ENCODE measurements at regions of chr17 and their contacts with region 1.

Region 1: DNA sequence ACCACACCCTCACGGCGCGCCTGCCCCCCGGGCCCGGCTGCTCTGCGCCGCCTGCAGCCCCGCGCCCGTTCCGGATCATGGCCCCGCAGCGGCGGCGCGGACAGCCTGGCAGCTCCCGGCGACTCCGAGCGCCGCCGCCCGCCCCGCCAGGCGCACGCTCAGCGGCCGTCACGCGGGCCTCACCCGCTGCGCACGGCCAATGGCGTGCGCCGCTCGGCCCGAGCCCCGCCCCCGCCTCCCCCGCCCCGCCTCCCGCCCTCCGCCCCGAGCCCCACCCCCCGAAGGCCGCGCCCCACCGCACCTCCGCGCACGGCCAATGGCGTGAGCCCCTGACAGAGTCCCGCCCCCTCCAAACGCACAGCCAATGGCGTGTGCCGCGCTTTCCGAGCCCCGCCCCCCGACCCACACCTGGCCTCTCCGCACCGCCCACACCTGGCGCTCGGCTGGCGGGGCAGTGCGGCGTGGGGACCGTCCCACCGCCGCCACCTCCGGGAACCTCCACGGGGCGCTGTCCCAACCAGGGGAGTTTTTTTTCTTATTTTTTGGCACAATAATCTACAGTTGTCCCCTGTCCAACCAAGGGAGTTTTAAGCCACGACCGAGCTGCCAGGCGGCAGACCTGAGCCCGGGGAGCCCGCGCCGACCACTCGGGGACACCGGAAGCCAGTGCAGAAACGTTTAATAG is at the start of gene PCYT2:
- DNase-seq: peak; percentile 85 to 97 (median 94)
- ATAC-seq: peak; percentile 94
- H3K4me3 ChIP-seq: peak within 1 kb of the TSS; percentile 68 to 73
- H3K4me3 Mint-ChIP-seq: peak within 1 kb of the TSS; percentile 85
- H3K27ac ChIP-seq: peak within 1 kb of the TSS; percentile 31 to 37
- H3K27ac Mint-ChIP-seq: peak within 1 kb of the TSS; percentile 55
- H3K4me1 ChIP-seq: peaks cover 18% of the 10 kb centered on the region
- H3K4me1 Mint-ChIP-seq: peaks cover 20% of the 10 kb centered on the region
- H3K27me3 ChIP-seq: no peaks in the 10 kb centered on the region
- H3K27me3 Mint-ChIP-seq: no peaks in the 10 kb centered on the region
- CTCF ChIP-seq: no peak
- total RNA-seq, gene PCYT2: 18.0 to 18.1 TPM

Region 2: GRCh38 chr17:81871387-81872230 is 39.8 kb before region 1 on chr17:
- CTCF ChIA-PET with region 1: no interaction called
- POLR2A ChIA-PET with region 1: interaction called, 3 read pairs
- intact Hi-C with region 1: loop called in 1 of 2 experiments (anchors 1 kb)
- DNase-seq: peak; percentile 90 to 97 (median 96)
- ATAC-seq: peak; percentile 29
- H3K4me3 ChIP-seq: peak overlapping the region; percentile 93 to 94
- H3K4me3 Mint-ChIP-seq: peak overlapping the region; percentile 87
- H3K27ac ChIP-seq: peak overlapping the region; percentile 96 to 98
- H3K27ac Mint-ChIP-seq: peak overlapping the region; percentile 96
- H3K4me1 ChIP-seq: peaks cover 39% of the 10 kb centered on the region
- H3K4me1 Mint-ChIP-seq: peaks cover 40% of the 10 kb centered on the region
- H3K27me3 ChIP-seq: no peaks in the 10 kb centered on the region
- H3K27me3 Mint-ChIP-seq: no peaks in the 10 kb centered on the region
- CTCF ChIP-seq: no peak

Region 3: GRCh38 chr17:81890447-81891299 is 20.7 kb before region 1 on chr17:
- CTCF ChIA-PET with region 1: no interaction called
- POLR2A ChIA-PET with region 1: no interaction called
- intact Hi-C with region 1: loop called (anchors 1 kb)
- DNase-seq: peak in 3 of 9 experiments; percentile 26 to 52 (median 38)
- ATAC-seq: no peak
- H3K4me3 ChIP-seq: peak overlapping the region; percentile 51 to 53
- H3K4me3 Mint-ChIP-seq: peak overlapping the region; percentile 87
- H3K27ac ChIP-seq: peak overlapping the region; percentile 54 to 57
- H3K27ac Mint-ChIP-seq: peak overlapping the region; percentile 95
- H3K4me1 ChIP-seq: peaks cover 19% of the 10 kb centered on the region
- H3K4me1 Mint-ChIP-seq: peaks cover 23% of the 10 kb centered on the region
- H3K27me3 ChIP-seq: no peaks in the 10 kb centered on the region
- H3K27me3 Mint-ChIP-seq: no peaks in the 10 kb centered on the region
- CTCF ChIP-seq: no peak

Region 4: DNA sequence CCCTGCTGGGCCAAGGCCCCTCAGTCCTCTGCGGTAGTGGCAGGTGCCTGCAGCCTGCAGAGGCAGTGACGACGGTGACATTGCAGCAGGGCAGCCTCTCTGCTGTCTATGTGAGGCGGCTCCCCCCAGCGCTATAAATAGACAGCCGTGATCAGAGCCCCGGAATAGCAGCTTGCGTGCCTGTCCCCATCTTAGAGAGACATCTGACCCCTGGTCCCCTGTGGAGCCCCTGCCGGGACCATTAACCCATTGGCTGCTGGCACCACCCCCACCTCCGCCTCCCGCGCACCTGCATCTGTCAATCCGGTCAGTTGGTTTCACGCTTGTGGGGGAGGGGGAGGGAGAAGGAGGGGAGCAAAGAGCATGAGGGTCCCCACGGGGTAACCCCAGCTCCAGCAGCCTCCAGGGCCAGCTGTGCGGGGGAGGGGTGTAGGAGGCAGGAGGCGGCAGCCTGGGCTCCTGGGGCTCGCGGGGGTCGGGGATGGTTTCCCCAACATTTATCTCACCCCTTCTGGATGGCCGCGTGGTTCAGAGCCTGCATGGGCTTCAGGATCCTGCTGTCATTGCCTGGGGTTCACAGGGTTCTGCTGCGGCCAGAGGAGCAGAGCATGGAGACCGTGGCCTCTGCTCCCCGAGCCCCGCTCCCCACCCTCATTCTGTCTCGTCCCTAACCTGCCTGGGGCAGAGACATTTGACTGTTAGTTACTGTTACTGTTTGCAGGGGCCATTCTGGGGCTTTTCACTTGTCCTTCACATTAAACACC is 30.6 kb after region 1 on chr17:
- CTCF ChIA-PET with region 1: no interaction called
- POLR2A ChIA-PET with region 1: no interaction called
- intact Hi-C with region 1: loop called in 1 of 2 experiments (anchors 1 kb)
- DNase-seq: no peak
- ATAC-seq: no peak
- H3K4me3 ChIP-seq: no peak overlapping the region
- H3K4me3 Mint-ChIP-seq: no peak overlapping the region
- H3K27ac ChIP-seq: no peak overlapping the region
- H3K27ac Mint-ChIP-seq: no peak overlapping the region
- H3K4me1 ChIP-seq: peaks cover 3% of the 10 kb centered on the region
- H3K4me1 Mint-ChIP-seq: no peaks in the 10 kb centered on the region
- H3K27me3 ChIP-seq: peaks cover 0 to 2% of the 10 kb centered on the region in 2 experiments
- H3K27me3 Mint-ChIP-seq: peaks cover 3% of the 10 kb centered on the region
- CTCF ChIP-seq: no peak